ENCODE measurements at regions of chr9 and their contacts with region 1.

Region 1: GRCh38 chr9:88874383-88874782 is 116.9 kb upstream of the S1PR3 start:
- DNase-seq: no peak

Region 2: GRCh38 chr9:88722753-88723152 is 151.6 kb before region 1 on chr9:
- intact Hi-C with region 1: loop called (anchors 10 kb)
- DNase-seq: no peak

Region 3: GRCh38 chr9:88781628-88782391 is 92.6 kb before region 1 on chr9:
- intact Hi-C with region 1: loop called (anchors 5 kb)
- DNase-seq: no peak

Region 4: GRCh38 chr9:88814577-88814976 is 59.8 kb before region 1 on chr9:
- intact Hi-C with region 1: loop called (anchors 5 kb)
- DNase-seq: peak; percentile 82

Region 5: DNA sequence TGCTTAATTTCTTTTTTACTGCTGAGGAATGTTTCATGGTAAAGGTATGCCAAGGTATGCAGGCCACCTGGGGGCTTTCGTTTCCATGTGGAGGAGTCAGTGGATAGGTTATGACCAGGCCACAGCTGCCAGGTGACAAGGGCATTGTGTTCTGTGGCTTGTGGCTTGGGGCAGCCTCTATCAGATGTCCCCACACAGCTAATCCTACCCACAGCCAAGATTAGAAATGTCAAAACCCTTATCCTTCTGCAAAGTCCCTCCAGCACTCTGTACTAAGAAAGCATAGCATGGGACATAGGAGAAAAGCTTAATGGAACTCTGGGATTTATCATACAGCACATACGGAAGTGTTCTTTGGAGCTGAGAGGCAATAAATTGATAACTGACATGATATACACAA is 54.3 kb before region 1 on chr9:
- intact Hi-C with region 1: loop called (anchors 5 kb)
- DNase-seq: no peak

Region 6: DNA sequence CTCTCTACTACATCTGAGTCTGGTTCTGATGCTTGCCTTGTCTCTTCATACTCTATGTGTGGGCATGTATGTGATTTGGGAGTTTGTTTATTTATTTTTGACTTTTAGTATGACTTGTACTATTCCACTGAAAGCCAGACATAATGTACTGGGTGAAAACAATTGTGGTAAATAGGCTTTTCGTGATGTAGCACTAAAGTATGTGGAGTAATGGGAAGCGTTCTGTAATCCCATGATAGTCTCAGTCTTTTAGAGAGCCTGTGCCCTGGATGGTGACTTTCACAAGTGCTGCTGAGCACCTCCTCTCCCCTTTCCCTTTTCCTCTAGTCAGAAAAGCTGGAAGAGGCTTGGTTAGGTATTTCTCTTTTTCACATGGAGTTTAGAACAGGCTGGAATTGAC is 31.1 kb after region 1 on chr9:
- intact Hi-C with region 1: no loop called
- DNase-seq: no peak

Region 7: DNA sequence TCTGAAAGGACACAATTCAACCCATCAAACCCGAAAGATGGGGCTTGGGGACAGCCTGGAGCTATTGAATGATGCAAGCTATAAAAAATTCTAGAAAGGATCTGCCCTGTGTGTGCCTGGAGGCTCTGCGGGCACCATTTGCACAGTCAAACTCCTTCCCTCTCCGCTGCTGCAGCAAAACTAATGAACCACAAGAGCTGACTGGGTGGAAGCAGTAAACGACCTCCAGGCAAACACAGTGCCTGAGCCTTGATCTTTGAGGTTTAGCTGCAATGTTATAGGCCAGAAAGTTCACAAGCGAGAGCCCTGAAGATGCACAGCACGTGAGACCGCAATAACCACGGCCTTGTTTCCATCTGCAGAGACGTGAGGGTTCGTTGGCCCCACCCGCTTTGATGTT is 47.6 kb after region 1 on chr9:
- intact Hi-C with region 1: loop called (anchors 10 kb)
- DNase-seq: no peak

Region 8: DNA sequence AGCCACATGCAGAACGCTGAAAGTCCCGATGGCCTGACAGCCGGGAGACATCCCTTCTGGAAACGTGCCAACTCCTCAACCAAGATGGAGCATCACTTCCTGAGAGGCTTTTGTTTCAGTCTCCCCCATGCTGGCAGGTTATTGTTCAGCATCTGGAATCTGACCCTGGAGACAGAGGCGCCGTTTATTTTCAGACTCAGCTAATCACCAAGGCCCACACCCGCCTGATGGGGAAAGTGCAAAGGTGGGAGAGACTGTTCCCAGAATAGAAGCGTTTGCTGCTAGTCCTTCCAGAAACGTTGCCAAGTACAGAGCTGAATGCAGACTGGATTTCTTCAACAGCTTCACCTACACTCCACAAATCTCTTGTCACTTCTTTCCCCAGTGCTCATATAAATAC is 75.0 kb after region 1 on chr9:
- intact Hi-C with region 1: no loop called
- DNase-seq: no peak